CD14-positive monocyte (primary cell): ENCODE measurements at regions of chr11 and their contacts with region 1.

Region 1: DNA sequence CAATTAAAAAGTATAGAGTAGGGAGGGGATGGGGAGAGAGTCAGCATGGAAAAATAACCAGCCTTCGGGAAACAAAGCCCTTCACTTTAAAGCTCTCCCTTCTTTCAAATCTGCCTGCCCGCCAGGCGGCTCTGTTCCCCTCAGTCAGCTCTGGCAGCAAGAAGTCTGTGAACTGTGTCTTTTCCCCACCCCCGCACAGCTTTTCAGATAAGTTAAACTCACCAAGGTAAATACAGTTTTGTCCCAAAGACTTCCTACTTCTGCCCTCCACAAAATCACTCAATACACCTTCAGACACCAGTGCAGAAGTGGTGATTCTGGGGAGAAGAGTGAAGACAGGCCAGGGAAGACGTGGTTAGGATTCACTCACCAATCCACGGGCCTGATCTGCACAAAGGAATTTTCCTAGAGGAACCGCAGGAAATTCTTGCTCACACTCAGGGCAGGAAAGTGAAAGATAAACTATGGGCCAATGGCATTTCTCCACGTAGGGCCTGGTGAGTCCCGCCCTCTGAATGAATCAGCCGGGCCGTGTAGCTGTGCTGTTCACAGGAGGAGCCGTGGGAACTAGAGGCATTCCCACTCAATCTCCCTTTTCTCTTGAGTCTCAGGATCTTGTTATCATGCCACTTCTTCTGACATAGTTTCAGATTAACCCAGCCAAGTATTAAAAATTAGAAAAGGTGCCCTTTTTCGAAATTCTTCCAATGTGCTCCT is at the start of gene TRIM5:
- DNase-seq: peak; percentile 83 to 96 (median 91)
- H3K4me3 ChIP-seq: peak within 1 kb of the TSS; percentile 63 to 99 (median 81)
- H3K4me3 Mint-ChIP-seq: peak within 1 kb of the TSS; percentile 92 to 95
- H3K27ac ChIP-seq: peak within 1 kb of the TSS; percentile 88 to 94
- H3K27ac Mint-ChIP-seq: peak within 1 kb of the TSS; percentile 97 to 100 (median 99)
- H3K4me1 ChIP-seq: peaks cover 27 to 31% of the 10 kb centered on the region in 2 donors
- H3K4me1 Mint-ChIP-seq: peaks cover 29% of the 10 kb centered on the region
- H3K27me3 ChIP-seq: no peaks in the 10 kb centered on the region
- H3K27me3 Mint-ChIP-seq: no peaks in the 10 kb centered on the region
- CTCF ChIP-seq: peak; percentile 55
- polyA plus RNA-seq, gene TRIM5: 9.4 to 14.4 (median 10.6) TPM

Region 2: GRCh38 chr11:5624489-5625279 is 60.1 kb before region 1 on chr11 and contains the start of gene TRIM34:
- intact Hi-C with region 1: loop called in 1 of 2 experiments (anchors 5 kb)
- DNase-seq: peak; percentile 79 to 93 (median 85)
- H3K4me3 ChIP-seq: peak within 1 kb of the TSS; percentile 66 to 99 (median 87)
- H3K4me3 Mint-ChIP-seq: peak within 1 kb of the TSS; percentile 94 to 98
- H3K27ac ChIP-seq: peak within 1 kb of the TSS; percentile 53 to 94
- H3K27ac Mint-ChIP-seq: peak within 1 kb of the TSS; percentile 91 to 98 (median 96)
- H3K4me1 ChIP-seq: peaks cover 27 to 28% of the 10 kb centered on the region in 2 donors
- H3K4me1 Mint-ChIP-seq: peaks cover 39% of the 10 kb centered on the region
- H3K27me3 ChIP-seq: no peaks in the 10 kb centered on the region
- H3K27me3 Mint-ChIP-seq: peaks cover 0 to 1% (median 1%) of the 10 kb centered on the region in 3 donors
- CTCF ChIP-seq: no peak
- polyA plus RNA-seq, gene TRIM34: 21.9 to 25.7 (median 23.5) TPM

Region 3: DNA sequence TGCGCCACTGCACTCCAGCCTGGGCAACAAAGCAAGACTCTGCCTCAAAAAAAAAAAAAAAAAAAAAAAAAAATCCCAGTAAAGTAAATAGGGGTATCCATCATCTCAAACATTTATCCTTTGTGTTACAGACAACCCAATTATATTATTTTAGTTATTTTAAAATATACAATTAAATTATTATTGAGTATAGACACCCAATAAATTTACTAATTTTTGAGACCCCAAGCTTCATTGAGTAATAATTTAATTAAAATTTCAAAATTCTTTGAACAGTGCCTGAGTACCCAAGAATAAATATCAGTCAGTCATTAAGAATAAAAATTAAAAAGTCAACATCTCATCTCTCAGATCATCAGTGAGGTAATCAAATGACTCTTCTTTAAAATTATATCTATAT is 69.1 kb after region 1 on chr11 and contains the start of gene OR52N4:
- intact Hi-C with region 1: no loop called
- DNase-seq: no peak
- H3K4me3 ChIP-seq: no peak within 1 kb of the TSS
- H3K4me3 Mint-ChIP-seq: no peak within 1 kb of the TSS
- H3K27ac ChIP-seq: no peak within 1 kb of the TSS
- H3K27ac Mint-ChIP-seq: no peak within 1 kb of the TSS
- H3K4me1 ChIP-seq: no peaks in the 10 kb centered on the region
- H3K4me1 Mint-ChIP-seq: no peaks in the 10 kb centered on the region
- H3K27me3 ChIP-seq: no peaks in the 10 kb centered on the region
- H3K27me3 Mint-ChIP-seq: no peaks in the 10 kb centered on the region
- CTCF ChIP-seq: no peak
- polyA plus RNA-seq, gene OR52N4: 0.24 to 0.31 TPM in 2 of 3 donors, not detected in the other

Region 4: DNA sequence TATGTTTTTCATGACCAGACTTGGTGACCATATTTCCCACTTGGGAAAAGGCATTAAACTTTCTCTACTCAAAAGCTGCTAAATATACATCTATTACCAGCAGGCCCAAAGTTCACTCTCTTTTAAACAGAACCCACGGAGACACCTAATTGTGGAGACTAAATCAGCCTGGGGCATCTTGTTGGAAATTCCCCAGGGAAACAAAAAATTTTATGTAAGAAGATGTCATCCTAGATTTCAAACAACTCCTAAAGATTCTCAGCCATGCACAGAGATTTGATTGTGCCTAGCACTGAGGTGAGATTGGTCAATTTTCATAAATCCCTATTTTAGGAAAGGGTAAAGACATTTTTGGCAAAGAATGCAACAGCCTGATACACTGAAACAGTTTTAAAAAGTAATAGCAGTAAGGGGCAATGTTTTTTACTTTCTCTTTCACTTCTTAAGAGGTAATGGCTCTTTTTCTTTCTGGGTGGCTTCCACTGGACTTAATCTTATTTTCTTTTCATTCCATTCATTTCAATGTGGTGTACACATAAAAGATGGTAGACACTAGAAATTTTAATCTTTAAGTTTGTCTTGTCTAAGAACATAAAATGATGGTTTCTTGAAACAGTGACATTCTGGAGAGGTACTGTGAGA is 133.6 kb after region 1 on chr11:
- intact Hi-C with region 1: loop called in 1 of 2 experiments (anchors 5 kb)
- DNase-seq: peak in 2 of 3 donors; percentile 7 to 40
- H3K4me3 ChIP-seq: peak overlapping the region in 2 of 3 experiments; percentile 10 to 38
- H3K4me3 Mint-ChIP-seq: peak overlapping the region; percentile 51 to 73
- H3K27ac ChIP-seq: peak overlapping the region in 1 of 2 donors; percentile 62
- H3K27ac Mint-ChIP-seq: peak overlapping the region in 5 of 7 donors; percentile 18 to 87 (median 55)
- H3K4me1 ChIP-seq: peaks cover 23 to 36% of the 10 kb centered on the region in 2 donors
- H3K4me1 Mint-ChIP-seq: peaks cover 32% of the 10 kb centered on the region
- H3K27me3 ChIP-seq: no peaks in the 10 kb centered on the region
- H3K27me3 Mint-ChIP-seq: no peaks in the 10 kb centered on the region
- CTCF ChIP-seq: no peak

Region 5: GRCh38 chr11:6505577-6506240 is 820.9 kb after region 1 on chr11:
- intact Hi-C with region 1: no loop called
- DNase-seq: peak; percentile 18 to 42 (median 40)
- H3K4me3 ChIP-seq: no peak overlapping the region
- H3K4me3 Mint-ChIP-seq: no peak overlapping the region
- H3K27ac ChIP-seq: no peak overlapping the region
- H3K27ac Mint-ChIP-seq: no peak overlapping the region
- H3K4me1 ChIP-seq: no peaks in the 10 kb centered on the region
- H3K4me1 Mint-ChIP-seq: no peaks in the 10 kb centered on the region
- H3K27me3 ChIP-seq: no peaks in the 10 kb centered on the region
- H3K27me3 Mint-ChIP-seq: no peaks in the 10 kb centered on the region
- CTCF ChIP-seq: peak; percentile 78